ENCODE measurements at regions of chr4 and their contacts with region 1.

Region 1: GRCh38 chr4:66972087-66972486 is 573.2 kb downstream of the CENPC start:
- DNase-seq: no peak
- H3K4me3 Mint-ChIP-seq: no peak overlapping the region
- H3K27ac Mint-ChIP-seq: no peak overlapping the region
- H3K4me1 Mint-ChIP-seq: peaks cover 42% of the 10 kb centered on the region
- H3K27me3 Mint-ChIP-seq: no peaks in the 10 kb centered on the region
- CTCF ChIP-seq: no peak

Region 2: DNA sequence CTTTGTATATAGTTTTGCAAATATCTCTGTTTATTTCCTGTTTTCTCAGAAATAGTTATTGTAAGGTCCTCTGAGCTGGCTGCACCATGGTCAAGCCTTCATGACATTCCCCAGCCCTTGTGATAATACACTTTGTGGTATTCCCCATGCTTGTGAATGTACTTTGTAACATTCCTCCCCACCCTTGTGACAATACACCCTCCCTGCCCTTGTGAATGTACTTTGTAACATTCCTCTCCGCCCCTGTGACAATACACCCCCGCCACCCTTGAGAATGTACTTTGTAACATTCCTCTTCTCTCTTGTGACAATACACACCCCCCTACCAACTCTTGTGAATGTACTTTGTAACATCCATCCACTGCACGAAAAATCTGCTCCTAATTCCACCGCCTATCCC is 42.5 kb after region 1 on chr4:
- CTCF ChIA-PET with region 1: no interaction called
- intact Hi-C with region 1: loop called (anchors 2 kb)
- DNase-seq: no peak
- H3K4me3 Mint-ChIP-seq: no peak overlapping the region
- H3K27ac Mint-ChIP-seq: no peak overlapping the region
- H3K4me1 Mint-ChIP-seq: peaks cover 13% of the 10 kb centered on the region
- H3K27me3 Mint-ChIP-seq: no peaks in the 10 kb centered on the region
- CTCF ChIP-seq: no peak

Region 3: GRCh38 chr4:67122029-67122428 is 149.9 kb after region 1 on chr4:
- CTCF ChIA-PET with region 1: no interaction called
- intact Hi-C with region 1: no loop called
- DNase-seq: peak; percentile 12
- H3K4me3 Mint-ChIP-seq: no peak overlapping the region
- H3K27ac Mint-ChIP-seq: no peak overlapping the region
- H3K4me1 Mint-ChIP-seq: no peaks in the 10 kb centered on the region
- H3K27me3 Mint-ChIP-seq: no peaks in the 10 kb centered on the region
- CTCF ChIP-seq: no peak

Region 4: DNA sequence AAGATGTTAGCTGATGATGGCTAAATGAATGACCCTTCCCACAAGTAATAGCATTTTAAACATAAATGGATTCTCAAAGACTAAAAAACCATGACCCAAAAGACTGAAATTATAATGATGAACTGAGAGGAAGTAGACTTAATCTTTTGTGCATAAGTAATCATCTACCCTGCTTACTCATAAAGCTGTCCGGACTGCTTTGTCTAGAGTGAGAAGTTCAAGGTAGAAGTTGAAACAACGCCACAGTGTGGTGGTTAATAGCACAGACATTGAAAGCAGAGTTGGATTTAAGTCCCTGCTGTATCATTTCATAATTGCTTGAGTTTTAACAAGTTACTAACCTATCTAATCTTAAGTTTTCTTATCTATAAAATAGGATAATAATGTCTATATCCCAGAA is 226.6 kb after region 1 on chr4:
- CTCF ChIA-PET with region 1: no interaction called
- intact Hi-C with region 1: loop called (anchors 10 kb)
- DNase-seq: peak; percentile 1
- H3K4me3 Mint-ChIP-seq: no peak overlapping the region
- H3K27ac Mint-ChIP-seq: no peak overlapping the region
- H3K4me1 Mint-ChIP-seq: no peaks in the 10 kb centered on the region
- H3K27me3 Mint-ChIP-seq: no peaks in the 10 kb centered on the region
- CTCF ChIP-seq: no peak